Common myeloid progenitor, CD34-positive (primary cell): ENCODE measurements at regions of chr20 and their contacts with region 1.

Region 1: GRCh38 chr20:815914-816606 is 17.5 kb upstream of the FAM110A start:
- DNase-seq: peak; percentile 64 to 79 (median 70)
- H3K4me3 ChIP-seq: no peak overlapping the region
- H3K27ac ChIP-seq: no peak overlapping the region
- H3K4me1 ChIP-seq: peaks cover 0 to 3% (median 0%) of the 10 kb centered on the region in 4 experiments
- H3K27me3 ChIP-seq: no peaks in the 10 kb centered on the region

Region 2: DNA sequence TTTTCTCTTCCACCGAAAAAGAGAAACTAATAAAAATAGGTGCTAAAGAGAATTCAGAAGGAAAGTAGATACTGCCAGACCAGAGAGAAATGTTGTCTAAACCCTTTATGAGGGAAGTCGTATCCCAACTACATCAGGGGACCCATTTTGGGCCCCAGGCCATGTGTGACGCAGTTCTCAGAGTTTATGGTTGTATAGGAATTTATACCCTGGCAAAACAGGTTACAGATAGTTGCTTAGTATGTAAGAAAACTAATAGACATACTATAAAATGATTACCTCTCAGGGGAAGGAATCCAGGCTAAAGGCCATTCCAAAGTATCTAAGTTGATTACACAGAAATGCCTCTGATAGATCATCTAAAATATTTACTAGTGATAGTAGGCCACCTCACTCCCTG is 19.1 kb before region 1 on chr20:
- CTCF ChIA-PET with region 1: interaction called, 11 read pairs
- POLR2A ChIA-PET with region 1: no interaction called
- DNase-seq: no peak
- H3K4me3 ChIP-seq: no peak overlapping the region
- H3K27ac ChIP-seq: no peak overlapping the region
- H3K4me1 ChIP-seq: no peaks in the 10 kb centered on the region
- H3K27me3 ChIP-seq: no peaks in the 10 kb centered on the region

Region 3: DNA sequence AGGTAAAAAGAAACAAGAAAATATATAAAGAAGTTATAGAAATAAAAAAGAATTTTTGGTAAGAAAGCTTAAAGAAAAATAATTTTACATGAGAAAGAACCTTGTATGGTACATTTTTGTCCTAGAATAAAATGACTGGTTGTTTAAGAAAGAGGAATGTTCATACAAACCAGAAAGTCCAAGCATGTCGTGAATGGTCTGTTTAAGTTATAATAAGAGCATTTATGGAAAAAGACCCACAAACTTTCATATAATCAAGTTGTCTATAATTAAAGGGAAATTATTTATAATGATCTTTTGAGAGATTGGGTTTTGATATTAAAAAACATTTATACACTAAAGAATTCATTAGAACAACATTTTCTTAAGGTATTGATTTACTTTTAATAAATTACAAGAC is 10.3 kb before region 1 on chr20:
- CTCF ChIA-PET with region 1: interaction called, 10 read pairs
- POLR2A ChIA-PET with region 1: no interaction called
- DNase-seq: peak in 2 of 3 donors; percentile 7 to 26
- H3K4me3 ChIP-seq: no peak overlapping the region
- H3K27ac ChIP-seq: no peak overlapping the region
- H3K4me1 ChIP-seq: no peaks in the 10 kb centered on the region
- H3K27me3 ChIP-seq: peaks cover 0 to 2% (median 0%) of the 10 kb centered on the region in 5 experiments

Region 4: GRCh38 chr20:833450-834150 is 17.5 kb after region 1 on chr20 and contains the start of gene FAM110A:
- CTCF ChIA-PET with region 1: interaction called, 22 read pairs
- POLR2A ChIA-PET with region 1: no interaction called
- DNase-seq: peak; percentile 95 to 98 (median 98)
- H3K4me3 ChIP-seq: peak within 1 kb of the TSS; percentile 54 to 90 (median 82)
- H3K27ac ChIP-seq: peak within 1 kb of the TSS; percentile 72 to 90
- H3K4me1 ChIP-seq: peaks cover 0 to 60% (median 38%) of the 10 kb centered on the region in 4 experiments
- H3K27me3 ChIP-seq: no peaks in the 10 kb centered on the region

Region 5: DNA sequence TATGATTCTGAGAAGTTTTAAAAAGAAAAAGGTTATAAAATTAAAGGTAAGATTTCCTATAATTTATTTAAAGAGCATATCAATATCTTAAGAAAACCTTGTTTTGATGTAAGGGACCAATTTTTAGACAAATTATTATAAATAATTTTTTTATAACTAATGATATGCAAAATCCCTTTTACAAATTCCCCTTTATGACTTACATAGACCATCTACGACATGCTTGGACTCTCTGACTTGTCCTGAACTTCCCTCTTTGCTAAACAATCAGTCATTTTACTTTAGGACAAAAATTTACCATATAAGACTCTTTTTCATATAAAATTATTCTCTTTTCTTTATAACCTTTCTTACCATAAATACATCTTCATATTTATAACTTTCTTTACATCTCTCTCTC is 115.3 kb after region 1 on chr20:
- CTCF ChIA-PET with region 1: no interaction called
- POLR2A ChIA-PET with region 1: no interaction called
- DNase-seq: peak in 2 of 3 donors; percentile 21 to 27
- H3K4me3 ChIP-seq: no peak overlapping the region
- H3K27ac ChIP-seq: no peak overlapping the region
- H3K4me1 ChIP-seq: no peaks in the 10 kb centered on the region
- H3K27me3 ChIP-seq: no peaks in the 10 kb centered on the region

Region 6: GRCh38 chr20:956330-956951 is 140.4 kb after region 1 on chr20:
- CTCF ChIA-PET with region 1: interaction called, 143 read pairs
- POLR2A ChIA-PET with region 1: no interaction called
- DNase-seq: peak; percentile 67 to 87 (median 81)
- H3K4me3 ChIP-seq: no peak overlapping the region
- H3K27ac ChIP-seq: no peak overlapping the region
- H3K4me1 ChIP-seq: peaks cover 0 to 7% (median 1%) of the 10 kb centered on the region in 4 experiments
- H3K27me3 ChIP-seq: peaks cover 0 to 14% (median 4%) of the 10 kb centered on the region in 5 experiments

Region 7: DNA sequence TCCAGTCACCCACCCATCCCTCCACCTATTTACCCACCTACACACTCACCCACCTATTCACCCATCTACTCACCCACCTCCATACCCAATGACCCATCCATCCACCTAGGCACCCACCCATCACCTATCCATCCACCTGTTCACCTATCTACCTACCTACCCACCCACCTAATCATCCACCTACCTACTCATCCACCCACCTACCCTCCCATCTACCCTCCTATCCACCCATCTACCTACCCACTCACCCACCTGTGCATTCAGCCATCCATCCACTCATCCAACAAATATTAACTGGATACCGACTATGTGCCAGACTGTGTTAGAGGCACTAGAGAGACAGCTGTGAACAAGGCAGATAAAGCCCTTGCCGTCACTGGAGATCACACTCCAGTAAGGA is 145.7 kb after region 1 on chr20:
- CTCF ChIA-PET with region 1: interaction called, 143 read pairs
- POLR2A ChIA-PET with region 1: no interaction called
- DNase-seq: no peak
- H3K4me3 ChIP-seq: no peak overlapping the region
- H3K27ac ChIP-seq: no peak overlapping the region
- H3K4me1 ChIP-seq: peaks cover 0 to 5% (median 1%) of the 10 kb centered on the region in 4 experiments
- H3K27me3 ChIP-seq: no peaks in the 10 kb centered on the region

Region 8: GRCh38 chr20:973785-974194 is 157.7 kb after region 1 on chr20:
- CTCF ChIA-PET with region 1: interaction called, 12 read pairs
- POLR2A ChIA-PET with region 1: no interaction called
- DNase-seq: peak; percentile 58 to 78 (median 75)
- H3K4me3 ChIP-seq: no peak overlapping the region
- H3K27ac ChIP-seq: no peak overlapping the region
- H3K4me1 ChIP-seq: no peaks in the 10 kb centered on the region
- H3K27me3 ChIP-seq: peaks cover 0 to 2% (median 0%) of the 10 kb centered on the region in 5 experiments